Gastrocnemius medialis (tissue), 4 donors: ENCODE measurements at regions of chr15 and their contacts with region 1.

Region 1: DNA sequence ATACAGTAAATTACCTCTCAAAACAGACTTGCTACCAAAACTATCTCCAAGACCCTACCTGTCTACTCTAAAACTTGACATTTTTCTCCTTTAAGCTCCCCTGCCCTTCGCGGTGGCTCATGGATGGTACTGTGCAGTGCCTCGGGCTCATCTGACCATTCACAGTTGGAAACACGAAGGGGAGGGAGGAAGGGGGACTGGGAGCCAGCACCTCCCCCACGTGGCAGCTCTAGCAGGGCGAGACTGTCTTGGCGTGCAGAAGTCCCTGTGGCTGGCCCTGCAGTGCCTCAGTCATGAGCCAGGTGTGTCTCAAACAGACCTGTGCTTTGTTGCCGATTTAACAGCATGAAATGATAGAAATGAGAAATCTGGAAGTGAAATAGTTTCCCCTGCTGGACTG is 372.0 kb downstream of the GABRG3 start:
- DNase-seq: no peak
- ATAC-seq: no peak
- H3K4me3 ChIP-seq: no peak overlapping the region
- H3K27ac ChIP-seq: no peak overlapping the region
- H3K4me1 ChIP-seq: no peaks in the 10 kb centered on the region
- H3K27me3 ChIP-seq: no peaks in the 10 kb centered on the region
- CTCF ChIP-seq: no peak
- POLR2A ChIP-seq: no peak

Region 2: GRCh38 chr15:27278761-27279160 is 64.2 kb before region 1 on chr15:
- in situ Hi-C with region 1: loop called in 1 of 4 experiments (anchors 10 kb)
- intact Hi-C with region 1: no loop called
- DNase-seq: no peak
- ATAC-seq: no peak
- H3K4me3 ChIP-seq: no peak overlapping the region
- H3K27ac ChIP-seq: no peak overlapping the region
- H3K4me1 ChIP-seq: no peaks in the 10 kb centered on the region
- H3K27me3 ChIP-seq: no peaks in the 10 kb centered on the region
- CTCF ChIP-seq: no peak
- POLR2A ChIP-seq: no peak

Region 3: DNA sequence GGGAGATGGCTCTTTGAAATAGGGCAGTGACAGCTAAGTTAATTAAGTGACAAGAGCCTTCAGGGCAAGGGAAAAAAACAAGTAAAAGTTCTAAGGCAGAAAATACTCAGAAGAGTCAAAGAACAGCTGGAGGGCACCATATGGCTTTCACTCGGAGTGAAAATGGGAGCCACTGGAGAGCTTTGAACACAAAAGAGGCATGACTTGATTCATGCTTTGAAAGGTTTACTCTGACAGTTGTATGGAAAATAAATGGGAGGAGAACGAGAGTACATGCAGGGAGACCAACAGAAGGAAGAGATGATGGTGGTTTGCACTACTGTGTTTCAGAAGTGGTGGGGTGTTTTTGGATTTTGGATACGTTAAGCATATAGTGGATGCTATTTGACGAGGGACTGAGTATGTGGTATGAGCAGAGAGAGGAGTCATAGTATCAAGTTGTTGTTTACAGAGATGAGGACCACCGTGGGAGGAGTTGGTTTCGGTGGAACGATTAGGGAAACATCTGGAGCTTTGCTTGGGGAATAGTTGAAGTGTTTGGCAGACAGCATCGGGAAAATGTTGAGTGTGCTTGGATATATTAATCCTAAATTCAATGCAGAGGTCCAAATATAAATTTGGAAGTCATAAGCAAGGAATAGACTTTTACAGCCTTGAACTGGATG is 39.5 kb after region 1 on chr15:
- in situ Hi-C with region 1: no loop called
- intact Hi-C with region 1: no loop called
- DNase-seq: no peak
- ATAC-seq: no peak
- H3K4me3 ChIP-seq: no peak overlapping the region
- H3K27ac ChIP-seq: no peak overlapping the region
- H3K4me1 ChIP-seq: no peaks in the 10 kb centered on the region
- H3K27me3 ChIP-seq: no peaks in the 10 kb centered on the region
- CTCF ChIP-seq: no peak
- POLR2A ChIP-seq: no peak

Region 4: DNA sequence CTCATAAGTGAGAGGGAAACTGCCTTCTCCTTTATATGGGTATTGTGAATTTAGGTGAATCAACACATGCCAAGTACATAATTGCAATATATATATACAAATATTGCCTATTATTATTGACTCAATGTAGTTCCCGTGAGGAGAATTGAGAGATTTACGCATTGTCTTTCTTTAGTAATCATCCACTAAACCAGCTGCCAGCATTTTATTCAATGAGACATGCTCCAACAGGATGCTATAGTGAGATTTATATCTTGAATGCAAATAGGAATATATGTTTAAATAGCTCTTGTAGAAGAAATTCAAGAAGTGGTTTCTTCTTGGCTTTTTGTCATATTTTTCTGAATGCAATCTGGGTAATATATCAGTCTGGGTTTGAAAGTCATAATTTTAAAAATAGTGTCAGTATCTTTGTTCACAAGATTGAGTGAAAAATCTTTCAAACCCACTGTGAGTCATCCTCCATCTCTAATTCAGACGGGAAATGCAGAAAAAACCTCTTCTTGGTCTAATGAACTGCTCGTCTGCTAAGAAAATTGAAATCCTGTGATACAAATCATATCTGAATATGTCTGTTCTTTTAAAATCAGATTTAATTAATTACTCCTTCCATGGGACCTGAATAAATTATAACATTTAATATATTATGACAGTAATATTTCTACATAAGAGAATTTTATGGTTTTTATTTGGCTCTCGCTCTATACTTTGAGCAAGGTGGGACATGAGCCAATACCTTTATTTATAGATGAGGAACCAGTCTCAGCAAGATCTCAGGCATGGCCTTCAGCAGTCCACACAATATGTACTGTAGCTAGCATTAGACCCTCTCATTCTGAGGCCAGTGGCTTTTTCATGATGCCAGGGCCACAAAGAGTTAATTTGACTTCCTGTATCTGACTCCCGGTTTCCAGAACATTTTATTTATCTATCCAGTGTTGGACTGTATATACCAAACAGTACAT is 144.0 kb after region 1 on chr15:
- in situ Hi-C with region 1: no loop called
- intact Hi-C with region 1: no loop called
- DNase-seq: no peak
- ATAC-seq: no peak
- H3K4me3 ChIP-seq: no peak overlapping the region
- H3K27ac ChIP-seq: no peak overlapping the region
- H3K4me1 ChIP-seq: no peaks in the 10 kb centered on the region
- H3K27me3 ChIP-seq: no peaks in the 10 kb centered on the region
- CTCF ChIP-seq: no peak
- POLR2A ChIP-seq: no peak